CD4-positive, alpha-beta memory T cell (primary cell): ENCODE measurements at regions of chr1 and their contacts with region 1.

Region 1: DNA sequence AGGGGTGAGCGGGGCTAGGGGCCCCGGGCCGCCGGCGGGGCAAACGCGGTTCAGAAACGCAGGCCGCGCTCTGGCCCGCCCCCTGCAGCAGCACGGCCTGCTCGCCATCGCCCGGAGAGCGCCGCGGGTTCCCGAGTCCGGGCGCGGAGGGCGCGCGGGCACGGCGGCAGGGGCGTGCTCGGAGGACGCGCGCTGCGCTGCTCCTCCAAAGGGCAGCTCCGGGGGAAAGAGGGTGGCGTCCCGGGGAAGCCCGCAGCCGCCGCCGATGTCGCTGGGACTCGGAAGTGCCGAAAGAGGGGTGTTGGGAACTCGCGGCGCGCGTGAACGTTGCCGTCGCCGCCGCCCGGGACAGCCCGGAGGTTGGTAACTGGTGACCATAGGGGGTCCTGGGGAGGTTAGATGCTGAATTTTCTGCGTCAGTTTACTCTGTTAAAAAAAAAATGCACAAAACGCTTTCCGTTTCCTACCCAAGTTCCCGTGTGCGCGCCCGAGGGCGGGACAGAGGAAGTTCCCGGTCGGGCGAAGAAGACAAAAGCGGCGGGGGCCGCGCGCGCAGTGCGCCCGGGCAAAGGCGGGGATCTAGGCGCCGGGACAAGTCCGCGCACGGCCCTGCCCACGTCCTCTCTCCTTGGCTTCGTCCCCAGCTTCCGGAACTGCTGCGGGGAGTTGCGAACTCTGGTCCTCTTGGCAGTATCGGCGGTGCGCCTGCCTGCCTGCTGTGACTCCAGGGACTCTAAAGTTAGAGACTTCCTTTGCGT is at the start of gene HHAT:
- DNase-seq: peak; percentile 63 to 70 (median 68)
- H3K4me3 ChIP-seq: peak within 1 kb of the TSS; percentile 50 to 75
- H3K4me3 Mint-ChIP-seq: peak within 1 kb of the TSS; percentile 94 to 99 (median 97)
- H3K27ac ChIP-seq: peak within 1 kb of the TSS; percentile 73
- H3K27ac Mint-ChIP-seq: peak within 1 kb of the TSS; percentile 83 to 98 (median 95)
- H3K4me1 ChIP-seq: peaks cover 53% of the 10 kb centered on the region
- H3K4me1 Mint-ChIP-seq: peaks cover 30 to 52% (median 42%) of the 10 kb centered on the region in 4 donors
- H3K27me3 ChIP-seq: no peaks in the 10 kb centered on the region
- H3K27me3 Mint-ChIP-seq: peaks cover 0 to 4% of the 10 kb centered on the region in 2 donors
- total RNA-seq, gene HHAT: 6.5 to 6.8 TPM

Region 2: GRCh38 chr1:210342986-210343780 is 14.3 kb after region 1 on chr1:
- CTCF ChIA-PET with region 1: interaction called, 5 read pairs
- POLR2A ChIA-PET with region 1: interaction called, 33 read pairs
- intact Hi-C with region 1: no loop called
- DNase-seq: peak in 1 of 5 donors; percentile 8
- H3K4me3 ChIP-seq: no peak overlapping the region
- H3K4me3 Mint-ChIP-seq: no peak overlapping the region
- H3K27ac ChIP-seq: no peak overlapping the region
- H3K27ac Mint-ChIP-seq: no peak overlapping the region
- H3K4me1 ChIP-seq: peaks cover 46% of the 10 kb centered on the region
- H3K4me1 Mint-ChIP-seq: peaks cover 0 to 21% (median 12%) of the 10 kb centered on the region in 4 donors
- H3K27me3 ChIP-seq: no peaks in the 10 kb centered on the region
- H3K27me3 Mint-ChIP-seq: no peaks in the 10 kb centered on the region

Region 3: DNA sequence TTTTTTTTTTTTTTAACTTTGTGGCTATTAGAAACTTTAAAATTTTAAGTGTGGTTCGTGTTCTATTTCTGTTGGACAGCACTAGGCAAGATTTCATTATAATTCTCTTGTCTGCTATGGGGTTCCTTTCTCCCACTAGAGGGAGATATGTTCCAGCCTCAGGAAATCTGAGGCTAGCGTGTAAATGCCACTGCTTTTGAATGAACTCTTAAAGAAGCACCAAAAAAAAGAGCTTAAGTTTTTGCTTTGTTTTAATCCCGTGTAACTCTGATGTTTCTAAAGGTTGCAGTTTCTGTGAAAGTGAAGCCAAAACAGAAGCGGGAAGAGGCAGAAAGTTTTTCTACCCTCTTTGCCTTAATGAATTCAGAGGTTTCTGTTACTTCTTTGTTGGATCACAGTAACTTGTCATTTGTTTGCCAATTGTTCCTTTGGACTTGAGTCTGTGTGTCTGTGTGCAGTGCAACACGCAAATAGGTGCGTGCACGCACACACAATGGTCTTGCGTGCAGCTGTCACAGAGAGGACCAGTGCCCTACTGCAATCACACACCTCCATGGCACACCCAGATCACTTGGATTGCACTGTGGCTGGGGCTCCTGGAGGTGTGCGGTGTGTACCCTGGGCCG is 32.0 kb after region 1 on chr1:
- CTCF ChIA-PET with region 1: interaction called, 17 read pairs
- POLR2A ChIA-PET with region 1: interaction called, 3 read pairs
- intact Hi-C with region 1: loop called (anchors 2 kb)
- DNase-seq: peak in 4 of 5 donors; percentile 17 to 34 (median 21)
- H3K4me3 ChIP-seq: no peak overlapping the region
- H3K4me3 Mint-ChIP-seq: no peak overlapping the region
- H3K27ac ChIP-seq: no peak overlapping the region
- H3K27ac Mint-ChIP-seq: no peak overlapping the region
- H3K4me1 ChIP-seq: no peaks in the 10 kb centered on the region
- H3K4me1 Mint-ChIP-seq: peaks cover 0 to 9% (median 3%) of the 10 kb centered on the region in 4 donors
- H3K27me3 ChIP-seq: no peaks in the 10 kb centered on the region
- H3K27me3 Mint-ChIP-seq: no peaks in the 10 kb centered on the region

Region 4: DNA sequence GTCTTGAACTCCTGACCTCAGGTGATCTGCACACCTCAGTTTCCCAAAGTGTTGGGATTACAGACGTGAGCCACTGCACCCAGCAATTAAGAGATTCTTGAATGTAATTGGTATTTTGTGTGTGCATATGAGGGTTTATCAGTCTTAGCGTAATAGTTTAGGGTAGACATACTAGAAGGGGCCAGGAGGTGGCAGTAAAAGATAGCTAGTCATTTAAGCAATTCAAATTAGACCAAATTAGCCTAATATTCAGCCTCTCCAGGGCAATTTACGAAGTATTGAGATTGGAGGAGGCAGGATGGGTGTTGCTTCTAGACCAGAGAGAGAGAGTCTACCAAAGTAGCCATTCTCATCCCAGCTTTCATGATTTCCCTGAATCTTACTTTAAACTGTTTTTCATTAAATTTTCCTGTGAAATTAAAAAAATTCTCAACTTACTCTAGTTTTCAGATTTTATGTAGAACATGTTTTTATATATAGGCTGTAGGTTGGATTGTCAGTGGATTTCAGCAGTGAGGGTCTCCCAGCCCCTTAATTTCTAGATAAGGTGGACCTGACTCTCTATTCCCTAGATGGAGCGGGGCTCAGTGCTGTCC is 119.5 kb after region 1 on chr1:
- CTCF ChIA-PET with region 1: no interaction called
- POLR2A ChIA-PET with region 1: no interaction called
- intact Hi-C with region 1: loop called (anchors 5 kb)
- DNase-seq: peak in 4 of 5 donors; percentile 10 to 18 (median 12)
- H3K4me3 ChIP-seq: no peak overlapping the region
- H3K4me3 Mint-ChIP-seq: no peak overlapping the region
- H3K27ac ChIP-seq: no peak overlapping the region
- H3K27ac Mint-ChIP-seq: no peak overlapping the region
- H3K4me1 ChIP-seq: peaks cover 14% of the 10 kb centered on the region
- H3K4me1 Mint-ChIP-seq: peaks cover 7 to 19% (median 12%) of the 10 kb centered on the region in 4 donors
- H3K27me3 ChIP-seq: no peaks in the 10 kb centered on the region
- H3K27me3 Mint-ChIP-seq: peaks cover 0 to under 1% of the 10 kb centered on the region in 2 donors

Region 5: DNA sequence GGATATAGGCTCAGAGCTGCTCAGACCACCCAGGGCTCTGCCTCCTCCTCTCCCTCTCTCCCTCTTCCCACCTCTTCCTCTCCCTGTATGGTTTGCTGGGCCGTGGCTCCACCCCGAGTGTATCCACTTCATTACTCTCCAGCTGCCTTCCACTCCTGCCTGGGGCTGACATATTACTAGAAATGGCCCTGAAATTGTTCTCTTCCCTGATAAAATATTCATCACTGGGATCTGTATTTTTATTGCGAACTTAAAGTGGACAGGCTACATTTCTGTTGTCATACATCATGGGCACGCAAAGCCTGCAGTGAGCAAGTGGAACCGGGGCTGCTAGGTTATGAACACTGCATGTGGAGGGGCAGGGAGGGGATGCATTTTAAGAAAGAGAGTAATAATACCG is 224.8 kb after region 1 on chr1:
- CTCF ChIA-PET with region 1: no interaction called
- POLR2A ChIA-PET with region 1: no interaction called
- intact Hi-C with region 1: no loop called
- DNase-seq: no peak
- H3K4me3 ChIP-seq: no peak overlapping the region
- H3K4me3 Mint-ChIP-seq: no peak overlapping the region
- H3K27ac ChIP-seq: no peak overlapping the region
- H3K27ac Mint-ChIP-seq: no peak overlapping the region
- H3K4me1 ChIP-seq: no peaks in the 10 kb centered on the region
- H3K4me1 Mint-ChIP-seq: no peaks in the 10 kb centered on the region
- H3K27me3 ChIP-seq: no peaks in the 10 kb centered on the region
- H3K27me3 Mint-ChIP-seq: peaks cover 0 to 2% of the 10 kb centered on the region in 2 donors